HEK293 (cell line): ENCODE measurements at regions of chr5 and their contacts with region 1.

Region 1: GRCh38 chr5:34486160-34486848 is 169.8 kb upstream of the RAI14 start:
- H3K4me3 ChIP-seq: no peak overlapping the region
- H3K27ac ChIP-seq: no peak overlapping the region
- H3K4me1 ChIP-seq: no peaks in the 10 kb centered on the region
- CTCF ChIP-seq: peak; percentile 79

Region 2: GRCh38 chr5:34474573-34475021 is 11.7 kb before region 1 on chr5:
- CTCF ChIA-PET with region 1: interaction called, 53 read pairs
- POLR2A ChIA-PET with region 1: no interaction called
- H3K4me3 ChIP-seq: no peak overlapping the region
- H3K27ac ChIP-seq: no peak overlapping the region
- H3K4me1 ChIP-seq: no peaks in the 10 kb centered on the region
- CTCF ChIP-seq: peak; percentile 69; the same call in 1 of the 2 replicates

Region 3: GRCh38 chr5:34511915-34512314 is 25.6 kb after region 1 on chr5:
- CTCF ChIA-PET with region 1: interaction called, 12 read pairs
- POLR2A ChIA-PET with region 1: no interaction called
- H3K4me3 ChIP-seq: no peak overlapping the region
- H3K27ac ChIP-seq: no peak overlapping the region
- H3K4me1 ChIP-seq: peaks cover 13% of the 10 kb centered on the region
- CTCF ChIP-seq: no peak

Region 4: DNA sequence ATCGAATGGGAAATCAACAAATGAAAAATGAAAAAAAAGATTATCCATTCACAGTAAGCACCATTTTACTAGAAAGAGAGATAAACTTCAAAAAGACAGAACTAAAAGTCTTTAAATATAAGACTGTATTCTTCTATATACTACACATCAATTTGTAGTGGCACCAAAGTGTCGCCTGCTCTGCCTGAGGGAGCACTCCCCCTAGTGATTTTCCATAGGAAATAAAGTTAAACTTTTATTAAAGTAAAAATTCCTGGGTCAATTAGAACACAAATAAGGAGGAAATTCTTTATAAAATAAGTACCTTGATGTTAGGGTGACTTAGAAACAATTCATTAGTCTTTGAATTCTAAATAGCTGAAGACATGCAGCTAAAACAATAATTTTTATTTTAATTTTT is 419.3 kb after region 1 on chr5:
- CTCF ChIA-PET with region 1: interaction called, 50 read pairs
- POLR2A ChIA-PET with region 1: no interaction called
- H3K4me3 ChIP-seq: no peak overlapping the region
- H3K27ac ChIP-seq: no peak overlapping the region
- H3K4me1 ChIP-seq: no peaks in the 10 kb centered on the region
- CTCF ChIP-seq: no peak

Region 5: DNA sequence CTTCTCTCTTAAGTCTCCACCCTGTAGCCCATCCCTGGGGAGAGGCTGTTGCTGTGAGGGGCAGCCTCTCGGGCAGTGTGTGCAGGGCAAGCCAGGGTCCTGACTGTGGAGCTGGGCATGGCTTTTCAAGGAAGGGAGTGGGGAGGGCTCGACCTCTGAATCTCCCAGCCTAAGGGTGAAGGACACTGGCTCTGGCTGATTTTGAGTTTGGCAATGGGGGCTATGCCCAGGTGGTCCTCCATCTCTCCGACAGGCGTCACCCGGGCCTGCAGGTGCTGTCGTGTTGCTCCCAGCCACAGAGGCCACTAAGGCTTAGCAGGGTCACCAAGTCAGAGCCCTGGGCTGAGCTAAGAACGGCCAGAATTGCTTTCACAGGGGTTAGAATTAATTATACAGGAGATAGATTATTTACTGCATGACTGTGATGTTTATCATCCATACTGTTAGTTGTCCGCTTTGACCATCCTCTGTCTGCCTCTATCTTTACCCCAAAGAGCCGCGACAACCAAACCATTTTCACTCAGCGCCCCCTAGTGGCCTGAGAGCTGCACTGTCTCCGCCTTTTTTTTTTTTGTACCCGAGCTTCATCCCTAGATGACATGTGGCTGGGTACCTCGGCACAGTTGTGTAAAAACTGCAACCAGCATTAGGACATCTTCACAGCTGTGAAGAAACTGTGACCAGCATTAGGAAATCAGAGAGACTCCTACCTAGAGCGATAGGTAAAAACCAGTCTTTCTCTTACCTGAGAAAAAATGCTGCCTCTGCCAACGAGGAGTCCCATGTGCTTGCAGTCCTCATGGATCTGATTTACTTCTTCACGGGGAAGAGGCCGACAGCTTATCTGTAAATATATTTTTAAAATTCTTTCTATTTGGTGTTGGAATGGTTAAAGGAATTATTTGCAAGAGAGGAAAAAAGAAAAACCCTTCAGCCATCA is 517.0 kb after region 1 on chr5:
- CTCF ChIA-PET with region 1: interaction called, 24 read pairs
- POLR2A ChIA-PET with region 1: no interaction called
- H3K4me3 ChIP-seq: no peak overlapping the region
- H3K27ac ChIP-seq: no peak overlapping the region
- H3K4me1 ChIP-seq: no peaks in the 10 kb centered on the region
- CTCF ChIP-seq: peak; percentile 62; the same call in 1 of the 2 replicates